ENCODE measurements at regions of chr12 and their contacts with region 1.

Region 1: DNA sequence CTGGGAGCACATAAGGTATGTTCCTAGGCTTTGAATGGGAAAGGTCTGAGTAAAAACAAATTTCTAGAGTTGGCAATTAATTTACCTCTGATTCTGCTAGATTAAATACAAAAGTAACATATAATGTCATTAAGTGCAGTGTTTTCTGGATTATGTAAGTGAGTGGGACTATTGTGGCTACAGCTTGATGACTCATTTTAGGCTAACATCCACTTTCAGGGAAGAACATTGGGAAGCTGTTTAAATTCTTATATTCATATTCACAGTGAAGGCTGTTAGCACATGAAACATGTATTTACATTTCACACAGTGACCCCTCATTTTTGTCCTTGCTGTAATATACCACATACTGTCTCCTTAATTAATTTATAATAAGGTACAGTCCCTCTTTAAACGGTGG is 13.2 kb upstream of the BMAL2 start:
- DNase-seq: no peak
- CTCF ChIP-seq: no peak

Region 2: DNA sequence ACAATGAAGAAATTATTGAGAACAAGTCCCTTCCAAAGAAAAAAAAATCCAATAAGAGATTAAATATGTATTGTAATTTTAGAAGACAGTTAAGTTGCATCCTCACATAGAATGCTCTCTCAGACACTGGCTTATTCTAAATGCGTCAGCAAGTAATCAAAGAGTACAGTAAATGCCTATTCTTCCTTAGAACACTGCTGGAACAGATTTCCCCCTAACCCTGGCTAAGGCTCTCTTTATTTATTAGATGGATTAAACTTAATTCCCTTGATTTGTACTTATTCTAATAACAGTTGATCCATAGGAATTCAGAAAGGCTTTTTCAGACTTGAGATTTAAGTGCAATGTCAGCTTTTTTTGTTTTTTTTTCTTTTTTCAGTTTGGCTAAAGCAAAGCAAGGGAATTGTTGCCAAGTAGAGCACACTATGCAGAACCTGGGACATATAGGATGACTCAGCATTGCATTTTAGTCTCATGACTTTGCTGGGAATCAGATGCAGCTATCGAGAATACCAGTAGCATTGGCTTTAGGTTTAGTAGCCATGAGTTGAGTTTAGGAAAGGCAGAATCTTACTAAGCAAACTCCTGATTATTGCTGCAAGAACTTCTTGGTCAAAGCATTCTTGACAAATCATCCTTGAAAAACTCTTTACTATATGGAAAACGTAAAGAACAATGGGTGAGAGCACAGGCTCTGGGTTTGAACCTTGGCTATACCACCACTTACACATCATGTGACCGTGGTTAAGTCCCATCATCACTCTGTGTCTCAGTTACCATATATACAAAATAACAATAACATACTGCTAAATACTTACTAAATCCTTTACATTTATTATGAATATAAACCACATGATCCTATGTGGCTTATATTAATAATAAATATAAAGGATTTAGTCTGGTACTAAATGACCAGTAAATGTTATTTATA is 270.3 kb before region 1 on chr12:
- in situ Hi-C with region 1: loop called (anchors 10 kb)
- DNase-seq: no peak
- CTCF ChIP-seq: no peak

Region 3: DNA sequence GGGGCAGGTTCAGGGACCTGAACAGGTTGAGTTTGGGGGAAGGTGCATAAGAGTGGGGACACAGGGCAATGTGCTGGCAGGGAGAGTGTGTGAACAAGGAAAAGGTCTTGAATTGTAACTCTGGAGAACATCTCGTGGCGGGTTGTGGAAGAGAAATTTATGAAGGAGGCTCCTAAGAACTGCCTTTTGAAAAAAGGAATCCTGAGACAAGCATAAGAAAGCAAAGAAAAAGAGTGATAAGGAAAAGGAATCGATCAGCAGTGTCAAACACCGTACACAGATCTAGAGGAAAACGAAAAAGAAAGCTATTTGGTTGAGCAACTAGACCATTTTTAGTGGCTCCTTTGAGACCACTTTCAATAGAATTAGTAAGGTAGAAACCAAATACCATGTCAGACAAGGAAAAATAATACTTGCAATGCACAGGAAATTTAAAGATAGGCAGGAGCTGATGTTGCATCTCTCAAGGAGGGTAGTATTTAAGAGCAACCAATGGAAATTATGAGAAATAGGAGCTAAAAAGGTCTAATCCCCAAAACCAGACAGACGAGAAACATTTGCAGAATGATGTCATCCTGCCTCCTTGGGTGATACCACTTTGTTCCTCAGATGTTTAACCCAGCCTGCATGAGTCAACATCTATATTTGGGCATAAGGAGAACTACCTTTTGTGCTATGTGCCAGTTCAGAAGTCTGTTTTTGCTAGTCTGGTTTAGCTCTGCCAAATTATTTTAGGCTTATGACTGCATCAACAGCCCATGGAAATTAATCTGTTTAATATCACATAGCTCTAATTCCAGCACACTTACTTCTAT is 139.8 kb before region 1 on chr12:
- in situ Hi-C with region 1: no loop called
- DNase-seq: peak; percentile 60
- CTCF ChIP-seq: no peak

Region 4: GRCh38 chr12:27367078-27367477 is 47.7 kb after region 1 on chr12:
- in situ Hi-C with region 1: no loop called
- DNase-seq: no peak
- CTCF ChIP-seq: no peak